ENCODE measurements at regions of chr7 and their contacts with region 1.

Region 1: GRCh38 chr7:33109005-33109757 is at the start of gene RP9:
- DNase-seq: peak; percentile 63
- H3K4me3 Mint-ChIP-seq: peak within 1 kb of the TSS; percentile 80
- H3K27ac Mint-ChIP-seq: peak within 1 kb of the TSS; percentile 80
- H3K4me1 Mint-ChIP-seq: peaks cover 4% of the 10 kb centered on the region
- H3K27me3 Mint-ChIP-seq: peaks cover 9% of the 10 kb centered on the region
- CTCF ChIP-seq: peak; percentile 67
- total RNA-seq, gene RP9: 29.1 and 32.1 TPM in 2 replicates

Region 2: GRCh38 chr7:32694182-32694581 is 415.0 kb before region 1 on chr7:
- CTCF ChIA-PET with region 1: interaction called, 13 read pairs
- POLR2A ChIA-PET with region 1: no interaction called
- intact Hi-C with region 1: loop called (anchors 5 kb)
- DNase-seq: no peak
- H3K4me3 Mint-ChIP-seq: no peak overlapping the region
- H3K27ac Mint-ChIP-seq: no peak overlapping the region
- H3K4me1 Mint-ChIP-seq: peaks cover 10% of the 10 kb centered on the region
- H3K27me3 Mint-ChIP-seq: no peaks in the 10 kb centered on the region
- CTCF ChIP-seq: no peak

Region 3: GRCh38 chr7:32803406-32804141 is 305.6 kb before region 1 on chr7:
- CTCF ChIA-PET with region 1: interaction called, 27 read pairs
- POLR2A ChIA-PET with region 1: no interaction called
- intact Hi-C with region 1: loop called (anchors 2 kb)
- DNase-seq: no peak
- H3K4me3 Mint-ChIP-seq: no peak overlapping the region
- H3K27ac Mint-ChIP-seq: no peak overlapping the region
- H3K4me1 Mint-ChIP-seq: no peaks in the 10 kb centered on the region
- H3K27me3 Mint-ChIP-seq: no peaks in the 10 kb centered on the region
- CTCF ChIP-seq: no peak

Region 4: GRCh38 chr7:32891800-32892520 is 217.2 kb before region 1 on chr7:
- CTCF ChIA-PET with region 1: interaction called, 7 read pairs
- POLR2A ChIA-PET with region 1: interaction called, 15 read pairs
- intact Hi-C with region 1: loop called (anchors 1 kb)
- DNase-seq: peak; percentile 97
- H3K4me3 Mint-ChIP-seq: peak overlapping the region; percentile 93
- H3K27ac Mint-ChIP-seq: peak overlapping the region; percentile 99
- H3K4me1 Mint-ChIP-seq: peaks cover 32% of the 10 kb centered on the region
- H3K27me3 Mint-ChIP-seq: no peaks in the 10 kb centered on the region
- CTCF ChIP-seq: no peak

Region 5: GRCh38 chr7:32957326-32958045 is 151.7 kb before region 1 on chr7 and contains the start of gene FKBP9:
- CTCF ChIA-PET with region 1: interaction called, 4 read pairs
- POLR2A ChIA-PET with region 1: interaction called, 15 read pairs
- intact Hi-C with region 1: no loop called
- DNase-seq: peak; percentile 89
- H3K4me3 Mint-ChIP-seq: peak within 1 kb of the TSS; percentile 80
- H3K27ac Mint-ChIP-seq: peak within 1 kb of the TSS; percentile 54
- H3K4me1 Mint-ChIP-seq: peaks cover 9% of the 10 kb centered on the region
- H3K27me3 Mint-ChIP-seq: no peaks in the 10 kb centered on the region
- CTCF ChIP-seq: no peak
- total RNA-seq, gene FKBP9: 111 and 139 TPM in 2 replicates

Region 6: DNA sequence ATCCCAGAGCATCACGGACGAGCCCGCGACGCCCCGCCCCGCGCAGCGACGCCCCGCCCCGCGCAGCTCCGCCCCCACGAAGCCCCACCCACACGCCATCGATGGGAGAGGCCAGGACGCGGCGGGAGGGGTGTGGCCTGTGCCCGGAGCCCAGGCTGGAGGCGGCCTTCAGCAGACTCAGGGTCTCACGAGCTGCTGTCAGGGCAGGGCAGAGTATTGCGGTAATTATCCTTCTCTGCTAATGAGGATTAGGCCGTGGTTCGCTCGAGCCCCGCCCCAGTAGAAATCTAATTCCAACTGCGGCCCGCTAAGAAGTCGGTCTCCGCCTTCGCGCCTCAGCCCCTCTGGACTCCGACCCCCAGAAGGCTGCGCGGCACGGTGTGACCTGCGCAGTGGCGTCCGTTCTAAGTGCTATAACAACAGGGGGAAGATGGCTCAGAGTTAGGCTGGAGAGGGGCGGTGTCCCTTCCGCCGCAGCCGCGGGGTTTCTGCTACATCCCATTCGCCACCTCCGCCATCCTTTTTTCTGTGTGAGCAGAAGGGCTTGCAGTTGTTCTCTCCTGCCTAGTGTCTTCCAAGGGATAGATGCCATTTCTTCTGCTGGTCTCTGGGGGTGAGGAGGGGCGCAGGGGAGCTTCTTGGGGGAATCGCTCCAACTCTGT is 46.3 kb before region 1 on chr7:
- CTCF ChIA-PET with region 1: interaction called, 21 read pairs
- POLR2A ChIA-PET with region 1: interaction called, 44 read pairs
- intact Hi-C with region 1: loop called (anchors 5 kb)
- DNase-seq: peak; percentile 92
- H3K4me3 Mint-ChIP-seq: peak overlapping the region; percentile 97
- H3K27ac Mint-ChIP-seq: peak overlapping the region; percentile 90
- H3K4me1 Mint-ChIP-seq: peaks cover 22% of the 10 kb centered on the region
- H3K27me3 Mint-ChIP-seq: no peaks in the 10 kb centered on the region
- CTCF ChIP-seq: no peak

Region 7: GRCh38 chr7:33128990-33129805 is 20.0 kb after region 1 on chr7 and contains the start of gene BBS9:
- CTCF ChIA-PET with region 1: interaction called, 14 read pairs
- POLR2A ChIA-PET with region 1: interaction called, 15 read pairs
- intact Hi-C with region 1: loop called (anchors 2 kb)
- DNase-seq: peak; percentile 94
- H3K4me3 Mint-ChIP-seq: peak within 1 kb of the TSS; percentile 89
- H3K27ac Mint-ChIP-seq: peak within 1 kb of the TSS; percentile 76
- H3K4me1 Mint-ChIP-seq: peaks cover 5% of the 10 kb centered on the region
- H3K27me3 Mint-ChIP-seq: no peaks in the 10 kb centered on the region
- CTCF ChIP-seq: no peak
- total RNA-seq, gene BBS9: 5.1 and 7.2 TPM in 2 replicates

Region 8: DNA sequence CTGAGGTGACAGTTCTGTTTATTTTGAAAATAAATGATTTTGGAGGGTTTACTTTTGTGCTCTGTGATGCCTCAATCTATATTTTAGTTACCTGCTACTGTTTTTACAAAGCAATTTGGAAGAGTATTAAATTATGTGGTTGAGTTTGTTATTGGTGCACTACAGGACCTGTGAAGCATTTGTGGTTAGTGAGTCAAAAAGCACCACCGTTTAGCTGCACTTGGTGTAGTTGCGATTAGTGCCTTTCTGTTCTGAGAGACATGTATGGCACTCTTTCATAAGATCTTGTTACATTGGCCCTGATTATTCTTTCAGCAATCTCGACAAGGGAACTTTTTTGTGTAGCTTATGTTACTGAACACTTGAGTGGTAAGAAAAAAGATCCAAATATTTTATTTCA is 152.4 kb after region 1 on chr7:
- CTCF ChIA-PET with region 1: no interaction called
- POLR2A ChIA-PET with region 1: no interaction called
- intact Hi-C with region 1: no loop called
- DNase-seq: no peak
- H3K4me3 Mint-ChIP-seq: no peak overlapping the region
- H3K27ac Mint-ChIP-seq: no peak overlapping the region
- H3K4me1 Mint-ChIP-seq: peaks cover 5% of the 10 kb centered on the region
- H3K27me3 Mint-ChIP-seq: no peaks in the 10 kb centered on the region
- CTCF ChIP-seq: no peak

Measured in MCF 10A (cell line).